ENCODE measurements at regions of chr6 and their contacts with region 1.

Region 1: DNA sequence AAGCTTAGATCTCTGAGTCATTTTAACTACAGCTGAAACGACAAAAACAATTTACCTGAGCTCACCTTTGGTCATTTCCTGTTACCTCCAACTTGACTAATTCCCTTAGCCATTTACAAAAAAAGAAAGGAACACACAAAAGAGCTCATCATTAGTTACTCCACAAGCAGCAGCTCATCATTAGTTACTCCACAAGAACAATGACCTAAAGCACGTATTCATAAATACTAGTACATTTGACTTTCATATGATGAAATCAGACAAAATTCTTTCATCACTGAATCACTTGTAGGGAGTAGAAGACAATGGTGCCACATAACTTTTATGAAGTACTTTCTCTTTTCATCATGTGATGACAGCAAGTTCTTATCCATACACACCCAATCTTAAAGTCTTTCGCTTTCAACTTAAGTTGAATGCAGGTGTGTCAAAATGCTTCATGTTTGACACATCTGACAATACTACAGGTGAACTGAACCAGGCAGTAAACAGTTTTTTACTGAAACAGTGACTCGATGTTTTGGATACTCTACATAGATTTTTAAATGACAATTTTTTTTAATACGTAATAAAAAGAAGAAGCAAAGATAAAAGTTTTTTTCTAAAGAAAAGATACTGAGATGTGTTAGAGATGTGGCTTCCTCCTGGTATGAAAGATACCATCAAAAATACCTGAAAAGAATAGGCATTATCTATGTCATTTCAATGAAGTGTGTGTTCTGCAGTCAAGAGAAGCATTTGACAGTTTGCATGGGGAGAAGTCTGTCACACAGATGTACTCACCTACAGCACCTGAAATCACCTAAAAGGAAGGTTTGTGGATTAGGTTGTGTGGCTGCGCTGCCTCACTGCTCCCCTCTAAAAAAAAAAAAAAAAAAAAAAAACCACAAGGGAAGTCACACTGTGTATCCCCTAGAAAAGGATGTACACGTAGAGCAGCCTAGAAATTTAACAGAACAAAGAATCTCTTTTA is 109.1 kb downstream of the PRDM1 start:
- DNase-seq: peak in 7 of 9 donors; percentile 43 to 70 (median 57)
- ATAC-seq: peak; percentile 81
- H3K4me3 ChIP-seq: peak overlapping the region; percentile 21
- H3K4me3 Mint-ChIP-seq: peak overlapping the region; percentile 19 to 80 (median 71)
- H3K27ac ChIP-seq: peak overlapping the region; percentile 30
- H3K27ac Mint-ChIP-seq: peak overlapping the region; percentile 64 to 91 (median 84)
- H3K4me1 ChIP-seq: peaks cover 30 to 36% of the 10 kb centered on the region in 2 donors
- H3K4me1 Mint-ChIP-seq: peaks cover 24 to 54% (median 41%) of the 10 kb centered on the region in 7 donors
- H3K27me3 ChIP-seq: no peaks in the 10 kb centered on the region
- H3K27me3 Mint-ChIP-seq: no peaks in the 10 kb centered on the region

Region 2: DNA sequence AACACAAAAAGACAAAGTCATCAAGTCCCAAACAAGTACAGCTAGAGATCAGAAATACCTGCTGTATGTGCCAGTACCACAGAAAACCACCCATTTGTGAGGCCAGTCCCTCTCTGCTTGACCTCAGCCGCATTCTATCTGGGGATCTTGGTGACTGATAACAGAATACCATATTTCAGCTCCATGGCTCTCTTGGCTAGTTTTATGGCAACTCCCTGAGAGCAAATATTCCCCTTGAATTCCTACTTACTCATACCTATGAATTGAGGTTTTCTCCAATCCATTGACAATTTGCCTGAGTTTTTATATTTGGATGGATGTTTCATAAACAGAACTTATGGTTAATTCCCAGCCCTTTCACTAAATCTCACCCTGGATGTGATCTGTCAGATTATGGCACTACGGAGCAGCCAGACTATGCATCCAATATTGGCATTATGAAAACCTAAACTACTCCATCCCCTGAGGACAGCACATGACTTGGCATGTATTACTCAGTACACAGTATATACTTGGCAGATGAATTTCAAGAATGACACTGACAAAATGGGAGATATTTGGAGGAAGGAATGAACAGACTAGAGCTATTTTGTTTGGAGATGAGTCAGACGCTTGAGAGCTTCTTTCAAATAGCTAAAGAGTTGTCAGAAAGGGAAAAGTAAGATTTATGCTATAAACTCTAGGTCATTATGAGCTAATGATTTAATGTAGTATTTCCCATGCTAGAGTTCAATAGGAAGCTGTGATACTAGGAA is 13.4 kb before region 1 on chr6:
- CTCF ChIA-PET with region 1: no interaction called
- POLR2A ChIA-PET with region 1: interaction called, 3 read pairs
- intact Hi-C with region 1: loop called (anchors 1 kb)
- DNase-seq: no peak
- ATAC-seq: no peak
- H3K4me3 ChIP-seq: no peak overlapping the region
- H3K4me3 Mint-ChIP-seq: no peak overlapping the region
- H3K27ac ChIP-seq: no peak overlapping the region
- H3K27ac Mint-ChIP-seq: peak overlapping the region in 1 of 9 donors; percentile 10
- H3K4me1 ChIP-seq: peaks cover 30 to 33% of the 10 kb centered on the region in 2 donors
- H3K4me1 Mint-ChIP-seq: peaks cover 3 to 47% (median 12%) of the 10 kb centered on the region in 7 donors
- H3K27me3 ChIP-seq: no peaks in the 10 kb centered on the region
- H3K27me3 Mint-ChIP-seq: no peaks in the 10 kb centered on the region

Measured in naive thymus-derived CD4-positive, alpha-beta T cell (primary cell).